Endothelial cell of umbilical vein (primary cell): ENCODE measurements at regions of chr1 and their contacts with region 1.

Region 1: DNA sequence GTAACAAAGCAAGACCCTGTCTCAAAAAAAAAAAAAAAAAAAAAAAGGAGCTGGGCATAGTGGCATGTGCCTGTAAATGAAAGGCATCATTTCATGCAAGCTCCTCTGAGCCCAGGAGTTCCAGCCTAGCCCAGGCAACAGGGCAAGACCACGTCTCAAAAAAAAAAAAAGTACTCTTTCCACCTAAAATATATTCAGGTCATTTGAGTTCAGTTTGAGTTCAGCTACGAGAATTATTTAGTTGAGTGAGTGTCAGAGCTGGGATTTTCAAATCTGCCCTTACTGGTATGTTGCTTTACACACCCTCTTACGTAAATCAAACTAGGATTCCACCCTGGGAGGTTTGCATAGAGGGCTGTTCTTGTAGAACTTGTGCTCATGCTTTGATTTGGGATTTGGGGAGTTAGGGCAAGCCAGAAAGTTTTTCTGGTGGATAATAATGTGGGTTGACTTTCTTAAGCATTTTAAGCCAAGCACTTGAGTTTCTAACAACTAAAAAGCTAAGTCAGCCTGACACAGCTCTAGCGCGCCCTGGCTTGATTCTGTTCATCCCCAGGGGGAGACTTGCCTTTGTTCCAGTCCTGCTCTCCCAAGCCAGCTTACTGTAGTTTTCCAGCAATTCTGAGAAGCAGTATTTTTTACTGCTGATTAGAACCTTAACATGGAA is 11.3 kb upstream of the PGD start:
- DNase-seq: peak; percentile 63
- H3K4me3 ChIP-seq: no peak overlapping the region
- H3K27ac ChIP-seq: peak overlapping the region; percentile 71
- H3K4me1 ChIP-seq: peaks cover 12% of the 10 kb centered on the region
- H3K27me3 ChIP-seq: no peaks in the 10 kb centered on the region
- CTCF ChIP-seq: no peak
- POLR2A ChIP-seq: no peak

Region 2: DNA sequence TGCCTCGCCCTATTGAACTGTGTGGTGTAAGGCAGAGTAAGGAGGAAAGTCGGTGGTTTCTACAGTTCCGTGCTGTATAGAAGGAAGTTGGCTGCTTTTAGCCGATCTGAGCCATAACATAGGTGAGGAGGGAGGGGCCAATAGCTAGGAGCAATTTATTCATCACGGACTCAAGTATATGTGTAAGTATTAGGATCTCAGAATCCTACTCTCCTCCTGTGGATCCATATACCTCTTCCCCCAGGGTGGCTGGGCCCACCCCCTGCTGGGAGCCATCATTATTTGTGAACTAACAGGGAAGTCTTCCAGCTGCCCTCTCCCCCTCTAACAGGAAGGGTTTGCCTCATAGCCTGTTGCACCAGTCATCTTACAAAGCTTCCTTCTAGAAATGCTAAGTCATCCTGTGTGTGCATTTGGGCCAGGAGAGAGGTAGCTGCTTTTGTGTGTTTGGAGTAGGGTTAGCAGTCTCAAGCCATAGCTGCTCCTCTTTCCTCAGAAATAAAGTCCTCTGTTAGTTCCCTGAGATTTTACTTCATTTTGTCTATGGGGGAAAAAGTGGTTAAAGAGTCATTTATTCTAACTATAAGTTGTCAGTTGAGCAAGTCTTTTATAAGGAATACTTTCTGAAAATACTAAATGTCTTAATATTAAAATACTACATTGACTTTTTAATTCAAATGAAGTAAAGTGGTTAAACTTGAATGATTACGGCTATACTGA is 27.8 kb after region 1 on chr1:
- CTCF ChIA-PET with region 1: interaction called, 10 read pairs
- POLR2A ChIA-PET with region 1: no interaction called
- dilution Hi-C with region 1: no loop called
- intact Hi-C with region 1: no loop called
- DNase-seq: peak; percentile 84
- H3K4me3 ChIP-seq: no peak overlapping the region
- H3K27ac ChIP-seq: peak overlapping the region; percentile 92
- H3K4me1 ChIP-seq: peaks cover 17% of the 10 kb centered on the region
- H3K27me3 ChIP-seq: no peaks in the 10 kb centered on the region
- CTCF ChIP-seq: no peak
- POLR2A ChIP-seq: peak; percentile 40